ENCODE measurements at regions of chr11 and their contacts with region 1.

Region 1: DNA sequence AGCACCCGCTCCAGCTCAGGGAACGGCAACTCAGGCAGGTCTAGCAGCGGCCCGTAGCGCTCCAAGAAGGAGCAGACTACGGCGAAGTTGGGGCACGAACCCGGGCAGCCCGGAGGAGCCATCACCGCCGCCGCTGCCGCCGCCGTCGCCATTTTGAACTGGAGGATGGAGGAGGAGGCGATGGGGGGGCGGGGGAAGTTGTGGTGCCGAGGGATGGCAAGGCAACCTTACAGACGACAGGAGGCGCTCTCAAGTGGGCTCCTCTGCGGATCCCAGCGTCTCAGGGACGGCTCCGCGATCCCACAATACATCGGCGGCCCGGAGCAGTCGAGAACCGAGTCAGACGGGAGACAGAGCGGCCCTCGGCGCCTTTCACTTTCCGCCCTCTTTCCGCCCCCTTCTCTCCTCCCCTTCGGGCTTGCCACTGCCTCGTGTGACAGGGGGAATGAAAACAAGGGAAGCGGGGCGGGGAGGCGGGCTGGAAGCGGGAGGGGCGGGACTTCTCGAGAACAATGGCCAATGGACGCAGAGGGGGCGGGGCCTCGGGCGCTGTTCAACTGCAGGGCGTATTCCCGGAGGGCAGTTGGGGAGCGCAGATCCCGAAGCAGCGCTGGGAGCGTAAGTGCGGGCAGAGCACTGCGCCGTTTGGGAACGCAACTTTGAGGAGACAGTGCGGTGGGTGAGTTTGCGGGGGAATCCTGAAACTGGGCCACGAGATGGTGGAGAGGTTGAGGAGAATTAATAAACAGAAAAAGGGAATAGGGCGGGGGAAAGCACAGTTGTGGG is at the starts of genes AAMDC and RSF1:
- DNase-seq: peak; percentile 99
- ATAC-seq: peak; percentile 81
- H3K4me3 Mint-ChIP-seq: peak within 1 kb of the TSS; percentile 94
- H3K27ac Mint-ChIP-seq: peak within 1 kb of the TSS; percentile 97
- H3K4me1 Mint-ChIP-seq: peaks cover 24% of the 10 kb centered on the region
- H3K27me3 Mint-ChIP-seq: no peaks in the 10 kb centered on the region
- CTCF ChIP-seq: no peak
- total RNA-seq, gene AAMDC: 22.8 to 29.9 TPM (median 28.2 TPM) in 3 replicates
- total RNA-seq, gene RSF1: 71.3 to 79.8 TPM (median 72.8 TPM) in 3 replicates

Region 2: GRCh38 chr11:77806993-77807740 is 13.6 kb before region 1 on chr11:
- CTCF ChIA-PET with region 1: no interaction called
- POLR2A ChIA-PET with region 1: no interaction called
- DNase-seq: no peak
- ATAC-seq: no peak
- H3K4me3 Mint-ChIP-seq: no peak overlapping the region
- H3K27ac Mint-ChIP-seq: peak overlapping the region; percentile 71
- H3K4me1 Mint-ChIP-seq: peaks cover 16% of the 10 kb centered on the region
- H3K27me3 Mint-ChIP-seq: no peaks in the 10 kb centered on the region
- CTCF ChIP-seq: no peak

Region 3: DNA sequence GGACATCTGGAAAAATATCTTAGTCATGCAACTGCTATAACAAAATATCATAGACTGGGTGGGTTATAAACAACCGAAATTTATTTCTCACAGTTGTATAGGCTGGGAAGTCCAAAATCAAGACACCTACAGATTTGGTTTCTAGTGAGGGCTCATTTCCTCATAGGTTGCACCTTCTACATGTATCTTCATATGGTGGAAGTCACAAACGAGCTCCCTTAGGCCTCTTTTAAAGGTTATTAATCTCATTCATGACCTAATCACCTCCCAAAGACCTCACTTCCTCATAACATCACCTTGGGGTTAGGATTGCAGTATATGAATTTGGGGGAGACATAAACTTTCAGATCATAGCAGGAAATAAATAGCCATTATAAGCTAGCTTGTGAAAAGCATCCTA is 88.5 kb after region 1 on chr11:
- CTCF ChIA-PET with region 1: no interaction called
- POLR2A ChIA-PET with region 1: no interaction called
- DNase-seq: no peak
- ATAC-seq: no peak
- H3K4me3 Mint-ChIP-seq: no peak overlapping the region
- H3K27ac Mint-ChIP-seq: no peak overlapping the region
- H3K4me1 Mint-ChIP-seq: peaks cover 5% of the 10 kb centered on the region; the same call in 1 of the 2 replicates
- H3K27me3 Mint-ChIP-seq: no peaks in the 10 kb centered on the region
- CTCF ChIP-seq: no peak

Region 4: GRCh38 chr11:77994412-77995362 is 173.9 kb after region 1 on chr11 and contains the start of gene INTS4:
- CTCF ChIA-PET with region 1: interaction called, 5 read pairs
- POLR2A ChIA-PET with region 1: interaction called, 17 read pairs
- DNase-seq: peak; percentile 99
- ATAC-seq: peak; percentile 99
- H3K4me3 Mint-ChIP-seq: peak within 1 kb of the TSS; percentile 98
- H3K27ac Mint-ChIP-seq: peak within 1 kb of the TSS; percentile 96
- H3K4me1 Mint-ChIP-seq: peaks cover 12% of the 10 kb centered on the region
- H3K27me3 Mint-ChIP-seq: no peaks in the 10 kb centered on the region
- CTCF ChIP-seq: no peak
- total RNA-seq, gene INTS4: 34.2 to 37.9 TPM (median 34.2 TPM) in 3 replicates

Measured in WTC11 (cell line).